ENCODE measurements at regions of chr2 and their contacts with region 1.

Region 1: DNA sequence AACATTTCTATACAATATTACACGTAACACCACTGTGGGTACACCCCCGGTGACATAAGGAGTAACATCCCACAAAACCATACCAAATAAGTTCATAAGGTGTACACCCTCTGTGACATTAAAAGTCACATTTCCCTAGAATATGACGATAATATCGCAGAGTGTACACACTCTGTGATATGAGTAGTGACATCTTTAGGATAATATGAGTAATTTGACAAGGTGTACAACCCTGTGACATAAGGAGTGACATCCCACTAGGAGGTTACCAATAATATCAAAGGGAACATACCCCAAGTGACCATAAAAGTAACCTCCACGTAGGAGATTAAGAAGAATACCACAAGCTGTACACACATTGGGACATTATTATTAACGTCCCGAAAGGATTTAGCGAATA is 24.0 kb upstream of the TEX261 start:
- DNase-seq: no peak
- H3K4me3 Mint-ChIP-seq: no peak overlapping the region
- H3K27ac Mint-ChIP-seq: no peak overlapping the region
- H3K4me1 Mint-ChIP-seq: peaks cover 8% of the 10 kb centered on the region
- H3K27me3 Mint-ChIP-seq: no peaks in the 10 kb centered on the region

Region 2: GRCh38 chr2:71049365-71050360 is 31.0 kb after region 1 on chr2:
- CTCF ChIA-PET with region 1: interaction called, 3 read pairs
- intact Hi-C with region 1: loop called (anchors 1 kb)
- DNase-seq: peak; percentile 88
- H3K4me3 Mint-ChIP-seq: no peak overlapping the region
- H3K27ac Mint-ChIP-seq: no peak overlapping the region
- H3K4me1 Mint-ChIP-seq: peaks cover 13% of the 10 kb centered on the region
- H3K27me3 Mint-ChIP-seq: no peaks in the 10 kb centered on the region

Region 3: DNA sequence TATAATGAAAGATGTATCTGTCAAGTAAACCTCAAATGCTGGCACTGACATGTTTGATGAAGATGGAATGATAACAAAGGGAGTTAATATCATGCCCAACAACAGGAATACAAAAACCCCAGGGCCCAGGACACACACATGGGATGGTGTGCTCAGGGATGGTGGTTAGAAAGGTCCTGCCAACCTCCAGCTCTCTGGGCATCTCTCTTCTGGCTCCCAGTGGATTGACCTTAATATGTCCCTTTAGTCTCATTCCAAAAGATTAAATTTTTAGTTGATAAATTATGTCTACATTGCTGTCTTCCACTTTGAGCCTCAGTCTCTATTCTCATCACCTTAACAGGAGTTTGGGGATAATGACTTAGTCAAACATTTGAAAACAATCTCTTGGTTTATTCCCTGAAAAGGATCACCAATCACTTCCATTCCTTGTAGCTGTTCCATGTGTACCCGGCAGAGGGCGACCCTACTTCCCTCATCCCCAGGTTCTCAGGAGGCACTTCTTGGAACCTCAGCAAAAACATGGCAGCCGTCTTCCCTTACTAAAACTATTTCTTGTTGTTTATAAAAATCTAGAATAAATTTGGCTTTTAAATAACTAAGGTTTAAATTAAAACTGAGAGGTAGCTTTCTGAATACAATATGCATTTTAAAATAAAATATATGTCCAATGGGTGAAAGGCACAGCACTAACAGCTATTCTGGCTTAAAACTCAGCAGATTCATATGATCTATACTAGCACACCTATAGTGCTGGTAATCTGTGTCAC is 81.8 kb after region 1 on chr2:
- CTCF ChIA-PET with region 1: no interaction called
- intact Hi-C with region 1: loop called (anchors 1 kb)
- DNase-seq: peak; percentile 75
- H3K4me3 Mint-ChIP-seq: no peak overlapping the region
- H3K27ac Mint-ChIP-seq: no peak overlapping the region
- H3K4me1 Mint-ChIP-seq: peaks cover 3% of the 10 kb centered on the region
- H3K27me3 Mint-ChIP-seq: peaks cover 3% of the 10 kb centered on the region

Region 4: DNA sequence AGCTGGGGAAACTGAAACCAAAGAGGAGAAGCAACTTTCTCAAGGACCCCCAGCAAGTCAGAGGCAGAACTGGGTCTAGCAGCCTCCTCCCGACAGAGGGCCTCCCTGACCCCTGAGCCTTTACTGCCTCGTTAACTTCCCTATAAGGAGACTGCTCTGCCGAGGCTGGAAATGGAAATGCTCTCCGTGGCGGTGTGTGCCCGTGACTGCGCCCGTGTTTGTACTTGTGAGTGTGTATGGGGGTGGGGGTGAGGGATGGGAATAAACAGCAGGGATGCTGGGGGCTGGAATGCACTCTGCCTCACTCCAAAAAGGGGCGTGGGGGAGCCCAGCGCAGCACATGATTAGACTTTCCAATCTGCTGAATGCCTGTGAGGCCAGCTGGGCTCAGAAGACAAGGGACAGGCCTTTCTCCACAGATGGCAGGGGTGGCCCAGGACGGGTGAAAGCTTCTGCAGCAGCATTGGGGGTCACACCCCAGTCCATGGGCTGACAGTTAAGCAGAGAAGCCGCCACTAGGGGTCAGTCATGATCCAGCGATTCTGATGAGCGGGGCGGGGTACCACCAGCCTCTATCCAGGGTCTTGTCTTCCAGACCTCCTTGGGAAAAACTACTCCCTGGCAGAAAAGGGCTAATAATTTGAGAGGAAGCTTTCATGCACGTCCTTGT is 138.6 kb after region 1 on chr2:
- CTCF ChIA-PET with region 1: interaction called, 5 read pairs
- intact Hi-C with region 1: loop called (anchors 2 kb)
- DNase-seq: peak; percentile 65
- H3K4me3 Mint-ChIP-seq: no peak overlapping the region
- H3K27ac Mint-ChIP-seq: no peak overlapping the region
- H3K4me1 Mint-ChIP-seq: peaks cover 2% of the 10 kb centered on the region
- H3K27me3 Mint-ChIP-seq: no peaks in the 10 kb centered on the region

Region 5: GRCh38 chr2:71510196-71510807 is 491.7 kb after region 1 on chr2:
- CTCF ChIA-PET with region 1: interaction called, 3 read pairs
- intact Hi-C with region 1: loop called (anchors 1 kb)
- DNase-seq: peak; percentile 80
- H3K4me3 Mint-ChIP-seq: no peak overlapping the region
- H3K27ac Mint-ChIP-seq: no peak overlapping the region
- H3K4me1 Mint-ChIP-seq: no peaks in the 10 kb centered on the region
- H3K27me3 Mint-ChIP-seq: peaks cover 3% of the 10 kb centered on the region